Calu3 (cell line): ENCODE measurements at regions of chrX and their contacts with region 1.

Region 1: DNA sequence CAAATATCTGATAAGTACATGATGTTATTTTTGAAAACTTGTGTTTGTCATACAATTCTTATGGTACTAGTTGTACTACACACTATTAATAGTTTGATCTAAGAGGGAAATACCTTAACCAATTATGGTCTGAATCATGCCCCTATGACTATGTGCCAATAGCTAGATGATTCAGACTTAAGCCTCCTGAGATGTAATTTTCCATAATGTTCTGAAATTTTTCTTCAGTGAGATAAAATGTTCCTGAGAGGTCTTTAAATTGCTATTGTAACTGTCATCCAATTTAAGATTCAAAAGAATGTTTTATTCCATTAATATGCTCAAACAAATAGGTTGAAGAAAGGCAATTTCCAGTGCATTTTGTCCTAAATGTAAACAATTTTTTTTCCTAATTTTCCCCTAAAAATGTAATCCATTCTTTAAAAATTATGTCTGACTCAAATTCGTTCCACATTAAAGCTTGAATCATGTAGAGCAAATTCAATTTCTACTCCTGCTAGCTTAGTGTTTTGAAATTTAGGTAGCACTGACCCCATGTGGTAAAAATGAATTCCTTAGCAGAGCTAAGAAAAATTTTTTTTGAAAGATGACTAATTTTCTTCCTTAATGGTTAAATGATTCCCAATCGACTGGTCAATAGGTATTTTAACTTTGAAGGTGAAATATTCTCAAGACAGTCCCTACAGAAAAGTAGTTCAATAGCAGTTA is 49.1 kb downstream of the APOOL start:
- DNase-seq: no peak
- H3K4me3 Mint-ChIP-seq: no peak overlapping the region
- H3K27ac Mint-ChIP-seq: peak overlapping the region; percentile 16
- H3K4me1 Mint-ChIP-seq: peaks cover 8% of the 10 kb centered on the region
- H3K27me3 Mint-ChIP-seq: no peaks in the 10 kb centered on the region
- CTCF ChIP-seq: no peak

Region 2: DNA sequence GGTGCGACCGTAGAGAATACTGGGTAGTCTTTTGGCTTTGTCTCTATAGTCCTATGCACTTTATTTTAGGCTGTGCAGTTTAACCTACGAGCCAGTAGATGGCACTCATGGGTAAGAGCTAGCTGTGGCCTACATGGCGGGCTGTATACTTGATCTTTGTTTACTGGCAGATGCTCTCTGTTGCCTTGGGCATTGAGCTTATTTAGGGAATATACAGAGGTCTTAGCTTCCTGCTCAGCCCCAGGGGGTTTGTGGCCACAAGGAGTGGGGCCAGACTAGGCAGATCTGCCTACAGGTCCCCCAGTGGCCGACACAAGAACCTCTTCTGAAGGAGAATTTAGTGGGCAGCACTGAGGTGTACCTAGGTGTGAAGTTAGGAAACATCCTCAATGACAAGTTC is 323.0 kb before region 1 on chrX:
- CTCF ChIA-PET with region 1: interaction called, 11 read pairs
- intact Hi-C with region 1: loop called (anchors 1 kb)
- DNase-seq: peak; percentile 4
- H3K4me3 Mint-ChIP-seq: no peak overlapping the region
- H3K27ac Mint-ChIP-seq: no peak overlapping the region
- H3K4me1 Mint-ChIP-seq: no peaks in the 10 kb centered on the region
- H3K27me3 Mint-ChIP-seq: no peaks in the 10 kb centered on the region
- CTCF ChIP-seq: peak; percentile 54

Region 3: DNA sequence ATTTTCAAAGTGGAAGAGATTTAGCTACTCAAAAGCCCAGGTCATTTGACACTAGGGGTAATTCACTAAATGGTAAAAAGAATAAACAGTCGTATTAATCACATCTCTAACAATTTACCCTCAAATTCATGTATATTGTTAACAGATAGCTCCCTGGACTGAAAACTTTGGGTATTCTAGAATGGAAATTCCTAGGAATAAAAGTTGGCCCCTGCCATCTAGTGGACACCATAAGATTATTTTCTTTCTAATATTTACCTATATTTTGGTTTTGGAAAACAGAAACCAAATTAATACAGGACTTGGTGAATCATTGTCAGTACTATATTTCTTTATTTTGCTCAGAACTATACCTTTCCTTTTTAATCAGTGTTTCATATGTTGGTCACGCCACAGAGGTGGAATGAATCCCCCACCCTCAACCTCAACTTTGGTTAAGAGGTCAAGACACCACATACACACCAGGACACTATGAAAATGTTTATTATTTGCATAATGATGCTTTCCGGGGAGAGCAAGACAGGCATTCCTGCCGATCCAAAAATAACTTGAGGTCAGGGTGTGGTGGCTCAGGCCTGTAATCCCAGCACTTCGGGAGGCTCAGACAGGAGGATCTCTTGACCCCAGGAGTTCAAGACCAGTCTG is 145.3 kb before region 1 on chrX:
- CTCF ChIA-PET with region 1: no interaction called
- intact Hi-C with region 1: loop called (anchors 5 kb)
- DNase-seq: no peak
- H3K4me3 Mint-ChIP-seq: no peak overlapping the region
- H3K27ac Mint-ChIP-seq: no peak overlapping the region
- H3K4me1 Mint-ChIP-seq: no peaks in the 10 kb centered on the region
- H3K27me3 Mint-ChIP-seq: no peaks in the 10 kb centered on the region
- CTCF ChIP-seq: no peak